Heart left ventricle (tissue), 16 donors: ENCODE measurements at regions of chr5 and their contacts with region 1.

Region 1: GRCh38 chr5:89988998-89989655 is 420.4 kb downstream of the CETN3 start:
- DNase-seq: peak in 4 of 5 donors; percentile 46 to 73 (median 55)
- ATAC-seq: peak; percentile 74 to 91 (median 89)
- H3K4me3 ChIP-seq: peak overlapping the region in 1 of 12 donors; percentile 1
- H3K27ac ChIP-seq: peak overlapping the region; percentile 41 to 85 (median 68)
- H3K4me1 ChIP-seq: peaks cover 0 to 34% (median 17%) of the 10 kb centered on the region in 12 donors
- H3K27me3 ChIP-seq: no peaks in the 10 kb centered on the region
- CTCF ChIP-seq: no peak
- POLR2A ChIP-seq: no peak

Region 2: GRCh38 chr5:89930591-89931392 is 58.3 kb before region 1 on chr5:
- intact Hi-C with region 1: loop called in 5 of 10 experiments (anchors 2 to 5 kb)
- DNase-seq: no peak
- ATAC-seq: peak; percentile 49 to 87 (median 72)
- H3K4me3 ChIP-seq: no peak overlapping the region
- H3K27ac ChIP-seq: peak overlapping the region in 11 of 12 donors; percentile 8 to 72 (median 31)
- H3K4me1 ChIP-seq: peaks cover 0 to 40% (median 24%) of the 10 kb centered on the region in 12 donors
- H3K27me3 ChIP-seq: no peaks in the 10 kb centered on the region
- CTCF ChIP-seq: no peak
- POLR2A ChIP-seq: no peak

Region 3: GRCh38 chr5:90055831-90056328 is 66.8 kb after region 1 on chr5:
- intact Hi-C with region 1: loop called in 1 of 10 experiments (anchors 5 kb)
- DNase-seq: no peak
- ATAC-seq: no peak
- H3K4me3 ChIP-seq: no peak overlapping the region
- H3K27ac ChIP-seq: no peak overlapping the region
- H3K4me1 ChIP-seq: peaks cover 0 to 12% (median 0%) of the 10 kb centered on the region in 12 donors
- H3K27me3 ChIP-seq: no peaks in the 10 kb centered on the region
- CTCF ChIP-seq: no peak
- POLR2A ChIP-seq: no peak

Region 4: DNA sequence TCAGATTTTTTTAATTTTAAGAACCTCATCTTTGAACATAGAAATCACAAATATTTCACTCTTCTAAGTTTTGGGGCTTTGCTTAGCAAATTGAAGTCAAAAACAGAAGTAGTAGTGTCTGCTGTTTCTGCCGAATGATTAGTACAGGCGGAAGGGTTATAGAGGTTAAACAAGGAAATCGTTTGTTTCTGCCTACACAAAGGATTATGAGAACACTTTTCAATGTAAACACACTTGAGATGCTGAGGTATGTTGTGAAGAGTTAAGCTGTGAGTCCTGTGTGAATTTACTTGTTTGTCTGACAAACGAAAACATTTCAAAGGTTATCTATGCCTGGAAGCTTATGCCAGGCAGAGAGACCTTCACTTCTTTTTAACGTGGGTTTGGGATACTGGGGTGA is 195.6 kb after region 1 on chr5:
- intact Hi-C with region 1: loop called in 1 of 10 experiments (anchors 10 kb)
- DNase-seq: no peak
- ATAC-seq: no peak
- H3K4me3 ChIP-seq: no peak overlapping the region
- H3K27ac ChIP-seq: no peak overlapping the region
- H3K4me1 ChIP-seq: peaks cover 0 to 4% (median 0%) of the 10 kb centered on the region in 12 donors
- H3K27me3 ChIP-seq: no peaks in the 10 kb centered on the region
- CTCF ChIP-seq: no peak
- POLR2A ChIP-seq: no peak

Region 5: DNA sequence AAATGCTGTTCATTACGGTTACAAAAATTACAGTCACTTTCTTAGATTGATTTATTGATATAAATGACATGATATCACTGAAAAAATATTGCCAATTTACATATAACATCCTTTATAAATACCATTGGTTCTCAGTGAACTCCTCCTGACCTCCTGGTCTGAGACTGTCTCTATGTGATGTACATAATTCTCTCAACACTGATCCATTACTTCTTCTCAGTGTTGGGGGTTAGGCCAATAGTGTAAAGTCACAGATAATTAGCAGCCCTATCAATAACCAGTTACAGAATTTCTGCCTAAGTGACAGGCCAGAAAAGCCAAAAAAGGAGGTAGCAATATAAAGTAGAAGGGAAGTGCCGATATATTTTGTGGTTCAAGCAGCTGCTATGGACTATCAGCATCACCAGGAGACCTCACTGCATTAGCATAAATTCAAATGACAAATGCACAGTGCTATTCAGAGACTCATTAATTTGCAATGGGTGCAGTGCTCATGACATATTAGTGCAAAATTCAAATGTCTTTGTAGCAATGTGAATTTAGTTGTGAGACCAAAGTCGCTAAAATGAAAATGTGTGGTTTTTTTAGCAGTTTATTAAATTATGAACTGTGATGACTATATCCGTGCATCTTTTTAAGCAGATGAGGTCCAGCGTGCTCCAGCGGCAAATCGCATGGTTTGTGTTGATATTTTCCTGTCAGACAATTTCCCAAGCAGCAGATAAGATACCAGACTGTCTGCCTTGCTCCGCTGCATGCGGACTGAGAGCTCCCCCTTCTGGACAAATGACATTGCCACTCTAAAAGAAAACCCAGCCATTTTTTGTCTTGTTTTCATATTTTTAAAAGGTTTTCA is 275.8 kb after region 1 on chr5:
- intact Hi-C with region 1: loop called in 1 of 10 experiments (anchors 10 kb)
- DNase-seq: peak; percentile 51 to 66 (median 59)
- ATAC-seq: peak in 3 of 4 donors; percentile 67 to 69 (median 68)
- H3K4me3 ChIP-seq: no peak overlapping the region
- H3K27ac ChIP-seq: peak overlapping the region in 1 of 12 donors; percentile 7
- H3K4me1 ChIP-seq: peaks cover 0 to 5% (median 0%) of the 10 kb centered on the region in 12 donors
- H3K27me3 ChIP-seq: no peaks in the 10 kb centered on the region
- CTCF ChIP-seq: peak; percentile 85 to 97 (median 92)
- POLR2A ChIP-seq: no peak